Calu3 (cell line): ENCODE measurements at regions of chr19 and their contacts with region 1.

Region 1: GRCh38 chr19:12139885-12140547 is at the start of gene ZNF20:
- DNase-seq: peak; percentile 95
- H3K4me3 Mint-ChIP-seq: peak within 1 kb of the TSS; percentile 78
- H3K27ac Mint-ChIP-seq: peak within 1 kb of the TSS; percentile 76
- H3K4me1 Mint-ChIP-seq: peaks cover 11% of the 10 kb centered on the region
- H3K27me3 Mint-ChIP-seq: no peaks in the 10 kb centered on the region
- CTCF ChIP-seq: no peak
- total RNA-seq, gene ZNF20: 2.0 and 4.5 TPM in 2 replicates

Region 2: DNA sequence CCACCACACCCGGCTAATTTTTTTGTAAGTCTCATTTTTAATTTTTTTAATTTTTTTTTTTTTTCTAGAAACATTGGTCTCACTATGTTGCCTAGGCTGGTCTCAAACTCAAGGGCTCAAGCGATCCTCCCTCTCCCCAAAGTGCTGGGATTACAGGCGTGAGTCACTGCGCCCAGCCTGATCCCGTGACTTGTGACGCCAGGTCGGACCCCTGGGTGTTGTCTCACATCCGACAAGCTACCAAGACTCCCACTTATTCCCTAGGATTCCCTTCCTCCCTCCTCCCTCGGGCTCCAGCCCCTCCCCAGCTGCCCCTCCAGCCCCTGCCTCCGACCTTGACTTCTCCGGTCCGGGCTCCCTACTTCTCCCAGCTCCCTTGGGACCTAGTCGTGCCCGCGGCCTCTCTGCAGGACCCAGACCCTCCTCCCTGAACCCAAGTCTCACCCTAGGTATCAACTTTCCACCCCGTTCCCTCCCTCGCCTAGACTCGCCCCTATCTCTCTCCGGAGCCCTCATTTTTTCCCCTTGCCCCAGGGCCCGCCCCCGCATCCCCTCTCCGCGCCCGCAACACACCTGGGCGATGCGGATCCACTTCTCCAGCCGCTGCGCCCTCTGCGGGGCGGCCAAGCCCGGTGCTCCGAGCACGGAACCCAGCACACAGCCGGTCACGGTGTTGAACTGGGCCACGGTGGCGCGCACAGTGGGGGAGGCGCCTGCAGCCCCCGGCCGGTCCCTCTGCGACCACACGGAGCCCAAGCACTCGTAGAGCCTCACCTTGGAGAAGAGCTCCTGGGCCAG is 734.0 kb before region 1 on chr19:
- CTCF ChIA-PET with region 1: no interaction called
- intact Hi-C with region 1: no loop called
- DNase-seq: no peak
- H3K4me3 Mint-ChIP-seq: no peak overlapping the region
- H3K27ac Mint-ChIP-seq: no peak overlapping the region
- H3K4me1 Mint-ChIP-seq: no peaks in the 10 kb centered on the region
- H3K27me3 Mint-ChIP-seq: no peaks in the 10 kb centered on the region
- CTCF ChIP-seq: no peak

Region 3: DNA sequence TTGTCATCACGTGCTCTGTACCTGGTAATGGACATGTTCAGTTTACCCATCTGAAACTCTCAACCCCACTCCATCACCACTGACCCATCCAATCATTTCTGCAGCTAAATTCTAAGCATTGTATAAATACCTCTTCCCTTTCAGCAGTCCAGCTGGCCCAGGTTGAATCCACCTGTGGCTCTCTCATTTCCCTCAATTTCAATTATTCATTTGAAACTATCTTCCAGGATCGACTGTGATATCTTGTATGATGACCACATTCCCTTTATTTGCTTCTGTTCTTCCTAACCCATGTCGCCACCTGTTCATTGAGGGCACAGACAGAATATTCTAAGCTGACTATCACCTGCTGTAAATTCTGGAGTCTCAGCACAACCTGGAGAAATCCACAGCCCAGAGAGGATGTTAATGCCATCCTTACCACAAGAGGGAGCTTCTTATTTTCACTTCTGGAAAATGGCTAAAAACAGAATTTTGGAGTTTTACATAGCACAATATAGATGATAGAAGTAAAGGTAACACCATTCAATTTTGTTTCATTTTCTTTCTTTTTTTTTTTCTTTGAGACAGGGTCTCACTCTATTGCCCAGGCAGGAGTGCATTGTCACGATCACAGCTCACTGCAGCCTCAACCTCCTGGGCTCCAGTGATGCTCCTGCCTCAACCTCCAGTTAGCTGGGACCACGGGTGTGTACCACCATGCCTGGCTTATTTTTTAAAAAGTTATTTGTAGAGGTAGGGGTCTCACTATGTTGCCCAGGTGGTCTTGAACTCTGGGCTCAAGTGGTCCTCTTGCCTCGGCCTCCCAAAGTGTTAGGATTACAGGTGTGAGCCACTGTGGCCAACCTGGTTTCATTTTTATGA is 439.9 kb before region 1 on chr19:
- CTCF ChIA-PET with region 1: interaction called, 3 read pairs
- intact Hi-C with region 1: loop called (anchors 5 kb)
- DNase-seq: peak; percentile 8
- H3K4me3 Mint-ChIP-seq: no peak overlapping the region
- H3K27ac Mint-ChIP-seq: no peak overlapping the region
- H3K4me1 Mint-ChIP-seq: peaks cover 7% of the 10 kb centered on the region
- H3K27me3 Mint-ChIP-seq: no peaks in the 10 kb centered on the region
- CTCF ChIP-seq: peak; percentile 43

Region 4: DNA sequence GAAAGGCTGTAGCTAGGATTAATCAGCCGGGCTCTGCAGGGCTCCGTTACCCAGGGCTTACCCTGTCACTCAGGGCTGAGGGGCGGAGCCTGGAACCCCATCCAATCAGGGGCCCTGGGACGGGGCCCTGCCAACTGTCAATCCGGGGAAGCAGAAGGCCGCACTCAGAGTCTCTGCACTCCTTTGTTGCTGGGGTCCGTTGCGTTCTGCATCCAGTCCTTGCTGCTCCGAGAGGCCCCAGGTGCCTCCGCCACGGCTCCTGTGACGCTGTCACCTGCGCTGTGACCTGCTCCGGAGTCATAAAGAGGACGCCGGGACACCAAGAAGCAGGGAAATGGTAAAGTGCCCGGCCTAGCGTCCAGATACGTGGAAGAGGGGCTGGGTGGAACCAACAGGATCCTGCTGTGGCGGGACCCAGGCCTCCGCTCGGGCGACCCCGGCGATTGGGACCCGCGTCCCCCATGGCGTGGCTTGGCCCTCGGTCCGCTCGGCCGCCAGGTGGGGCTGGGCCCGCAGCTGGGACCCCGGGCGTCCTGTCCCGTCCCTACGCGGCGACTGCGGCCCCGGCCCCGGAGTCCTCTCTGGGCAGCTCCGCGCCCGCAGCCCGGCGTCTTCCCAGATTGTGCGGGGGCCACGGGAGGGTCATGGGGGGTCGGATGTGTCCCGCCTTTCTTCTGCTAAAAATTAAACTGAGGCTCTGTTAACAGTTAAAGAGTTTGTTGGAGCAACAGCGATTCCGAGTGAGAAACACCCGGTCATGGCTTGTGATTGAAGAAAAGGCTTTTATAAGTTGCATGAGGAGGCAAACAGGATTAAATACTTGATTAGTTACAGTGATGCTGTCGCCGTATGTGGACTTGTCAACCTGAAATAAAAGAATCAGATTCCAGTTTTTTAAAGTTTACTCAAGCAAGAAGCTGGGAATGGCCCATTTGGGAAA is 341.4 kb before region 1 on chr19 and contains the start of gene ZNF491:
- CTCF ChIA-PET with region 1: interaction called, 16 read pairs
- intact Hi-C with region 1: no loop called
- DNase-seq: peak; percentile 79
- H3K4me3 Mint-ChIP-seq: peak within 1 kb of the TSS; percentile 77
- H3K27ac Mint-ChIP-seq: no peak within 1 kb of the TSS
- H3K4me1 Mint-ChIP-seq: no peaks in the 10 kb centered on the region
- H3K27me3 Mint-ChIP-seq: no peaks in the 10 kb centered on the region
- CTCF ChIP-seq: no peak
- total RNA-seq, gene ZNF491: 0.24 and 0.92 TPM in 2 replicates

Region 5: DNA sequence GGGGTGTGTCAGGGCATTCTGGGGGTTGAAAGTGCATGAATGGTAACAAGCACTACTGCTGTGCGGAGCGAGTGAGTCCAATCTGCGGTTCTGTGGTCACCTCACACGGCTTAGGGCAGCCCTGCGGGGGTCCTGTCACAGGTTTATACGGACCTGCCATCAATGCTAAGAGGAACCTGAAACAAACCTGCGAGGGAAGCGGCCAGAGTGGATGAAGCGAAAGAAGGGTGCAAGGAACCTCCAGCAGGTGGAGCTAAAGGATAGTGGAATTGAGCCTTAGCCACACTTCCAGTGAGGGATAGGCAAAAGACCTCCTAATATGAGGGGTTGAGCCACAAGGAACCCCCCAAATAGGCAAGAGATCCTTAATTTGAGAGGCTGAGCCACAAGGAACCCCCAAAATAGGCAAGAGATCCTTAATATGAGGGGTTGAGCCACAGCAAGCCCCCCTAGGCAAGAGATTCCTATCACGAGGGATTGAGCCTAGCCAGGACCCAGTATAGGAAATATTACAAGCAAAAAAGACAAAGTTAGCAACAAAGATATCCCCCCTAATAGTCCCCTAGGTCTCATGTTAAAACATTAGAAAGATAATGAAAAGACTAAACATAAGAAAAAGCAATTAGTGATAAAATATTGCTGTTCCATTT is 258.7 kb before region 1 on chr19:
- CTCF ChIA-PET with region 1: interaction called, 3 read pairs
- intact Hi-C with region 1: loop called (anchors 1 kb)
- DNase-seq: peak; percentile 35
- H3K4me3 Mint-ChIP-seq: no peak overlapping the region
- H3K27ac Mint-ChIP-seq: no peak overlapping the region
- H3K4me1 Mint-ChIP-seq: no peaks in the 10 kb centered on the region
- H3K27me3 Mint-ChIP-seq: no peaks in the 10 kb centered on the region
- CTCF ChIP-seq: peak; percentile 46

Region 6: DNA sequence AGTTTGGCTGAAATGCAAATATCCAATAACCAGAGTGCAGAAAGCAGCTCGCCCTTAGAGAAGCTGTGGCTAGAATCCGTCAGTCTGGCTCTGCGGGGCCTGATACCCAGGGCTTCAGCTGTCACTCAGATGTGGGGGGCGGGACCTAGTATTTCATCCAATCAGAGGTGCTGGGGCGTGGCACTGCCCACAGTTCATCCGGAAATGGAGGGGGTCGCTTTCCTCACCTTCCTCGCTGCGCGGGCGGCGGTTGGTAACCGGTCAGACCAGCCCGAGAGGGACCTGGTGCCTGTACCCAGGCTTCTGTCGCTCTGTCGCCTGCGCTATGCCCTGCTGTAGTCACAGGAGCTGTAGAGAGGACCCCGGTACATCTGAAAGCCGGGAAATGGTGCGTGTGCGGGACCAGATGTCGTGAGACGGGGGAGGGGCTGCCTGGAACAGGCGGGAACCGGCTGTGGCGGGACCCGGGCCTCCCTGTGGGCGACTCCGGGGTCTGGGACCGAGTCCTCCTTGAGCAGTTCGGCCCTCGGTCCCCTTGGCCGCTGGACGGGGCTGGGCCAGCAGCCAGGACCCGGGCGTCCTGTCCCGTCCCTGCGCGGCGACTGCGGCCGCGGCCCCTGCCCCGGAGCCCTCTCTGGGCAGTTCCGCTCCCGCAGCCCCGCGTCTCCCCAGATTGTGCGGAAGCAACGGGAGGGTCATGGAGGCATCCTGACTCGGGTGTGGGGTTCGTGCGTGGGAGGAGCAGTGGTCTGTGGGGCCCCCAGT is 214.9 kb before region 1 on chr19 and contains the start of gene ZNF700:
- CTCF ChIA-PET with region 1: interaction called, 21 read pairs
- intact Hi-C with region 1: loop called (anchors 1 kb)
- DNase-seq: peak; percentile 93
- H3K4me3 Mint-ChIP-seq: peak within 1 kb of the TSS; percentile 91
- H3K27ac Mint-ChIP-seq: peak within 1 kb of the TSS; percentile 92
- H3K4me1 Mint-ChIP-seq: peaks cover 18% of the 10 kb centered on the region
- H3K27me3 Mint-ChIP-seq: no peaks in the 10 kb centered on the region
- CTCF ChIP-seq: no peak
- total RNA-seq, gene ZNF700: 11.4 and 11.7 TPM in 2 replicates

Region 7: GRCh38 chr19:11964858-11965645 is 175.0 kb before region 1 on chr19 and contains the start of gene ZNF763:
- CTCF ChIA-PET with region 1: no interaction called
- intact Hi-C with region 1: loop called (anchors 2 kb)
- DNase-seq: peak; percentile 87
- H3K4me3 Mint-ChIP-seq: peak within 1 kb of the TSS; percentile 63
- H3K27ac Mint-ChIP-seq: no peak within 1 kb of the TSS
- H3K4me1 Mint-ChIP-seq: peaks cover 9% of the 10 kb centered on the region
- H3K27me3 Mint-ChIP-seq: no peaks in the 10 kb centered on the region
- CTCF ChIP-seq: no peak
- total RNA-seq, gene ZNF763: 1.7 and 2.0 TPM in 2 replicates

Region 8: DNA sequence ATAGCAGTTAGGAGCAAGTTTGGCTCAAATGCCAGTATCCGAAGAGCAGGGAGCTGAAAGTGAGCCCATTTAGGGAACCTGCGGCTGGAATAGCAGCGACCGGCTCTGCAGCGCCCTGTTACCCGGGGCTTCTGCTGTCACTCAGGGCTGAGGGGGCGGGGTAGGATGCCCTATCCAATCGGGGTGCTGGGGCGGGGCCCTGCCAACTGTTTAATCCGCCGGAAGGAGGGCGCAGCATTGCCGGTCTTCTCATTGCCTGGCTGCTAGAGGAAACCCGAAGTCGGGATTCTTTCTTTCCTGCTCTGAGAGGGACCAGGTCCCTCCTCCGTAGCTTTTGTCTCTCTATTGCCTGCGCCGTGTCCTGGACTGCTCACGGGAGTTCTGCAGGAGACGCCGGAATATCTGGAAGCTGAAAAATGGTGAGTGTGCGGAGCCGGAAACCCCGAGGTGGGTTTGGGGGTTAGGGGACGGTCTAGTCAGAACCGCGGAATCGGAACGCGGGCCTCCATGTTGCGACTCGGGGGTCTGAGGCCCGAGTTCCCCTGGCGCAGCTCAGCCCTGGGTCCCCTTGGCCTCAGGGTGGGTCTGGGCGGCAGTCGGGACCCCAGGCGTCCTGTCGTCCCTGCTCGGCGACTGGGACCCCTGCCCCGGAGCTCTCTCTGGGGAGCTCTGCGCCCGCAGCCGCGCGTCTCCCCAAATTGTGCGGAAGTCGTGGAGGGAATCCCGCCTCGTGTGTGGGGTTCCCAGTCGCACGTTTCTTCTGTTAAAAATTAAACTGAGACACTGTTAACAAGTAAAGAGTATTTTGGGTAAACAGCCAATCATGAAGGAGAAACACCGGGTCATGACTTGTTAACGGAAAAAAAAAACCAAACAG is 152.4 kb before region 1 on chr19:
- CTCF ChIA-PET with region 1: no interaction called
- intact Hi-C with region 1: loop called (anchors 5 kb)
- DNase-seq: peak; percentile 91
- H3K4me3 Mint-ChIP-seq: peak overlapping the region; percentile 83
- H3K27ac Mint-ChIP-seq: peak overlapping the region; percentile 54
- H3K4me1 Mint-ChIP-seq: no peaks in the 10 kb centered on the region
- H3K27me3 Mint-ChIP-seq: no peaks in the 10 kb centered on the region
- CTCF ChIP-seq: no peak

Region 9: DNA sequence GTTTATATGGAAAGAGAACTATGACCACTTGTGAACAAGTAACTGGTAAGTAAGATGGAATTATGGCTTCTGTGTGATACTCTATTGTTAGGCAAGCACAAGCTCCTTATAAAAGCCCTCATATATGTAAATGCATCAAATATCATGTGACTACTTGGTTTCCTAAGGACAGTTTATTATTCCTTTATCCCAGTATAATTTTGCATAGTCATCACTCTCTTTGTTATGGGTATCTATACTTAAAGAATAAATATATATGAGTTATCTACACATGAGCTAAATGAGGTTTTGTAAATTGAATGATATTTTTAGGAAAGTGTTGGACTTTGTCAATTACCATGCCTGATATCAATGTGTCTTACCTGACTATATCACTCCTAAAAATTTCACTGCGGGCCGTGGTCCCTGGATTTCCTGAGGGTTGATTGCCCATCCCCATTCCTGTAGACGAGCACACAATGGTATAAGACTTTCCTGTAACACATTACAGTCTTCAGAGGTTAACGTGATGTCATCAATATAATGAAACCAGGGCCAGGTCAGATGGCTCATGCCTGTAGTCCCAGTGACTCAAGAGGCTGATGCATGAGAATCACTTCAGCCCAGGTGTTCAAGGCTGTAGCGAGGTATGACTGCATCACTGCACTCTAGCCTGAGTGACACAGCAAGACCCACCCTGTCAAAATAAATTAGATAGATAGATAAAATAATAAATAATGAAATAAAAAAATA is 54.8 kb before region 1 on chr19:
- CTCF ChIA-PET with region 1: no interaction called
- intact Hi-C with region 1: no loop called
- DNase-seq: no peak
- H3K4me3 Mint-ChIP-seq: no peak overlapping the region
- H3K27ac Mint-ChIP-seq: no peak overlapping the region
- H3K4me1 Mint-ChIP-seq: no peaks in the 10 kb centered on the region
- H3K27me3 Mint-ChIP-seq: no peaks in the 10 kb centered on the region
- CTCF ChIP-seq: no peak

Region 10: GRCh38 chr19:12247644-12248222 is 107.7 kb after region 1 on chr19:
- CTCF ChIA-PET with region 1: no interaction called
- intact Hi-C with region 1: no loop called
- DNase-seq: no peak
- H3K4me3 Mint-ChIP-seq: no peak overlapping the region
- H3K27ac Mint-ChIP-seq: no peak overlapping the region
- H3K4me1 Mint-ChIP-seq: no peaks in the 10 kb centered on the region
- H3K27me3 Mint-ChIP-seq: no peaks in the 10 kb centered on the region
- CTCF ChIP-seq: no peak